Posterior cingulate gyrus (tissue), 11 donors: ENCODE measurements at regions of chr13 and their contacts with region 1.

Region 1: GRCh38 chr13:39051157-39051556 is 12.9 kb downstream of the NHLRC3 start:
- DNase-seq: no peak

Region 2: DNA sequence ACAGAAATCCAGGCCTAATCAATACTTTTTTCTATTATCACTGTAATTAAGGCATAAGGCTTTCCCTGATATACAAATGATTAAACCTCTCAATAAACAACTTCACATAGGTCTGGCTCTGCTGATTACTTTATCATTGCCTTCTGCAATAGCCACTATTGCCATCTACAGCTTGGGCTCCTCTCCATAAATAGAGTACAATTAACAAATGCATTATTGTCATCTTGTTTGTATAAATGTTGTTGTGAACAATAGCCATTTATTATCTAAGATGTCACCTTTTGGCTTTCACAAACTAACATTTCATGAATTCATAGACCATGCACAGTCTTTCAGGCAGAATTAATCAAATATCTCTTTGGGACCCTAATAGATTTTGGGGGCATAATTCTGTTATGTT is 40.4 kb after region 1 on chr13:
- intact Hi-C with region 1: loop called (anchors 5 kb)
- DNase-seq: no peak

Region 3: DNA sequence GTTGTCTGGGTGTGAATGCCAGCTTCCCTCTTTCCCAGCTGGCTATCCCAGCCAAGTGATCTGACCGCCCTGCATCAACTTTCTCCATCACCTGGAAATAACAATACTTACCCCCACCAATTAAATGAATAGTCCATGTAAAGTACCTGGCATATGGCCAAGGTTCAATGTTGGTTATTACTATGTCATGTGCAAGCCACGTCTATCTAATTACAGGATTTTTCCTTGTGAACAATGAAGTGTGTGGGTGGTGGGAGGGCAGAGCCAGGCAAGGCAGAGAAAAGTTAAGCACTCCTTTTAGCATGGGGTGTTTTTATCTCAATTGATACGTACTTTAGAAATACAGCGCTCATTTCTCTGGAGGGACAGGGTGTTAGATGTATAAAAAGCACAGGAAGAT is 108.2 kb after region 1 on chr13:
- intact Hi-C with region 1: no loop called
- DNase-seq: no peak

Region 4: DNA sequence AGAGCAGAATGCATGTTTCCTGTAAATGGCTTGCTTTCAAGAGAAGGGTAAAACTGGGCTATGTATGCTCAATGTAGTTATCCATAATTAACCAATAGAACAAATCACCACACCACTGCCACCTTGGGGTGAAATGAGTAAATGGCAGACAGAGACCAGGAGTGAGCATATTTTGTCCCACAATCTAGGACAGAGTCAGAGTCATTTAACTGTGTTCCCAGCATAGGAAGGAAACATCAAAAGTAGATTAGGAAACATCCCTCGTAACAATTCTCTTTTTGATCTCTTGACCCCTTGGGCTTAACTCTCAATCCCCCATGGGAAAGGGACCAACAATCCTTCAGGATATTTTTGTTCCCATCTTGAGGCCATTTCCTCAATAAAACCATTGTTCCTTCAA is 211.9 kb after region 1 on chr13:
- intact Hi-C with region 1: loop called (anchors 2 kb)
- DNase-seq: peak in 4 of 10 donors; percentile 33 to 54 (median 45)

Region 5: DNA sequence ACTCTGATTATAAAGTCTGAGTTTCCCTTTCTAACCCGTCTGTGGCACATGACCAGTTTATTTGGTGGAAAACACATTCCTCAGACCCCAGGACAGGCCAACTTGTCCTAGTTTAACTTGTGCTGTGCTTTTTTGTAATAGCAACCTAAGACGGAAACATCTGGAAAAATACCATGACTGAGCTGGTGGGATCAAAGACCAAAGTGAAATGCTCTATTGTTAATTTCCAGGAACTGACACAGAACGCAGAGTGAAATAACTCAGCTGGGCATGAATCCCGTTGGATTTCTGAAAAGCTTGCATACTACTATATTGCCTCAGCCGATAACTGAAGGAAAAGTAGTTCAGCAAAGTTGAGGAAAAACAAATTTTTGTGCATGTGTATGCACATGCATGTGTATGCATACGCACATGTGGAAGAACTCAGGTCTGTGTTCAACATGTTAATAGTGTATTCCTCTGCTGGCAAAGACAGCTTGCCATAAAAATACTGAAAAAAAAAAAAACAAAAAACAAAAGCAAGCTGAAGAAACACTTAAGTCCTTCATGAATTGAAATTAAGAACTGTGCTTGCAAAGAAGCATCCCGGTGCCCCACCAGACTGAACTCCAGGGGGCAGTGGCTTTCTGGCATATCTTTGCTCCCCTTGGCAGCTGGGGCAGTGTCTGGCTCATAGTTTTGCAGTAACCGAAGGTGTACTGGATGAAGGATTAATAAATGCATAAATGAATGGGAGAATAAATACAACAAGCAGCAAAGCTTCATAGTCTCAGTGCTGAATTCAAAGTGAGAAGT is 364.0 kb after region 1 on chr13:
- intact Hi-C with region 1: loop called (anchors 5 kb)
- DNase-seq: peak in 7 of 10 donors; percentile 42 to 93 (median 52)

Region 6: GRCh38 chr13:39616087-39616694 is 565.0 kb after region 1 on chr13:
- intact Hi-C with region 1: loop called (anchors 2 kb)
- DNase-seq: peak in 6 of 10 donors; percentile 7 to 87 (median 42)

Region 7: GRCh38 chr13:39676315-39676876 is 625.2 kb after region 1 on chr13:
- intact Hi-C with region 1: loop called (anchors 10 kb)
- DNase-seq: no peak